Tibial artery (tissue), 4 donors: ENCODE measurements at regions of chr9 and their contacts with region 1.

Region 1: GRCh38 chr9:92749934-92750315 is 14.7 kb downstream of the BICD2 start:
- DNase-seq: no peak
- H3K4me3 ChIP-seq: no peak overlapping the region
- H3K27ac ChIP-seq: peak overlapping the region; percentile 37 to 43
- H3K4me1 ChIP-seq: peaks cover 0 to 65% (median 46%) of the 10 kb centered on the region in 4 donors
- H3K27me3 ChIP-seq: no peaks in the 10 kb centered on the region
- CTCF ChIP-seq: no peak

Region 2: GRCh38 chr9:92308893-92309292 is 441.0 kb before region 1 on chr9:
- intact Hi-C with region 1: loop called (anchors 10 kb)
- DNase-seq: no peak
- H3K4me3 ChIP-seq: no peak overlapping the region
- H3K27ac ChIP-seq: no peak overlapping the region
- H3K4me1 ChIP-seq: no peaks in the 10 kb centered on the region
- H3K27me3 ChIP-seq: no peaks in the 10 kb centered on the region
- CTCF ChIP-seq: no peak

Region 3: GRCh38 chr9:94166237-94166963 is 1416.5 kb after region 1 on chr9:
- intact Hi-C with region 1: no loop called
- DNase-seq: peak; percentile 98 to 99
- H3K4me3 ChIP-seq: peak overlapping the region; percentile 88 to 93
- H3K27ac ChIP-seq: peak overlapping the region; percentile 97 to 99
- H3K4me1 ChIP-seq: peaks cover 4 to 46% (median 25%) of the 10 kb centered on the region in 4 donors
- H3K27me3 ChIP-seq: no peaks in the 10 kb centered on the region
- CTCF ChIP-seq: peak; percentile 12 to 32